Common myeloid progenitor, CD34-positive (primary cell): ENCODE measurements at regions of chr22 and their contacts with region 1.

Region 1: GRCh38 chr22:30104501-30105156 is 24.4 kb downstream of the HORMAD2 start:
- DNase-seq: peak; percentile 36 to 51 (median 37)
- H3K4me3 ChIP-seq: no peak overlapping the region
- H3K27ac ChIP-seq: no peak overlapping the region
- H3K4me1 ChIP-seq: peaks cover 4 to 22% (median 16%) of the 10 kb centered on the region in 4 experiments
- H3K27me3 ChIP-seq: no peaks in the 10 kb centered on the region

Region 2: GRCh38 chr22:30116362-30117117 is 11.9 kb after region 1 on chr22:
- CTCF ChIA-PET with region 1: interaction called, 10 read pairs
- POLR2A ChIA-PET with region 1: no interaction called
- DNase-seq: no peak
- H3K4me3 ChIP-seq: no peak overlapping the region
- H3K27ac ChIP-seq: no peak overlapping the region
- H3K4me1 ChIP-seq: no peaks in the 10 kb centered on the region
- H3K27me3 ChIP-seq: no peaks in the 10 kb centered on the region

Region 3: GRCh38 chr22:30250661-30251267 is 146.1 kb after region 1 on chr22:
- CTCF ChIA-PET with region 1: interaction called, 20 read pairs
- POLR2A ChIA-PET with region 1: no interaction called
- DNase-seq: no peak
- H3K4me3 ChIP-seq: no peak overlapping the region
- H3K27ac ChIP-seq: no peak overlapping the region
- H3K4me1 ChIP-seq: peaks cover 1 to 65% (median 49%) of the 10 kb centered on the region in 4 experiments
- H3K27me3 ChIP-seq: peaks cover 0 to 22% (median 0%) of the 10 kb centered on the region in 5 experiments